ENCODE measurements at regions of chr1 and their contacts with region 1.

Region 1: GRCh38 chr1:109120356-109120755 is 6.4 kb downstream of the ELAPOR1 start:
- DNase-seq: no peak
- H3K4me3 ChIP-seq: no peak overlapping the region
- H3K27ac ChIP-seq: no peak overlapping the region
- H3K4me1 ChIP-seq: no peaks in the 10 kb centered on the region
- CTCF ChIP-seq: no peak

Region 2: GRCh38 chr1:108983114-108983513 is 137.2 kb before region 1 on chr1:
- CTCF ChIA-PET with region 1: no interaction called
- POLR2A ChIA-PET with region 1: no interaction called
- intact Hi-C with region 1: no loop called
- DNase-seq: no peak
- H3K4me3 ChIP-seq: no peak overlapping the region
- H3K27ac ChIP-seq: no peak overlapping the region
- H3K4me1 ChIP-seq: no peaks in the 10 kb centered on the region
- CTCF ChIP-seq: no peak

Region 3: GRCh38 chr1:109131059-109131458 is 10.7 kb after region 1 on chr1:
- CTCF ChIA-PET with region 1: no interaction called
- POLR2A ChIA-PET with region 1: interaction called, 12 read pairs
- intact Hi-C with region 1: no loop called
- DNase-seq: no peak
- H3K4me3 ChIP-seq: no peak overlapping the region
- H3K27ac ChIP-seq: no peak overlapping the region
- H3K4me1 ChIP-seq: peaks cover 17% of the 10 kb centered on the region
- CTCF ChIP-seq: no peak

Measured in OCI-LY7 (cell line).